Natural killer cell (primary cell): ENCODE measurements at regions of chr19 and their contacts with region 1.

Region 1: DNA sequence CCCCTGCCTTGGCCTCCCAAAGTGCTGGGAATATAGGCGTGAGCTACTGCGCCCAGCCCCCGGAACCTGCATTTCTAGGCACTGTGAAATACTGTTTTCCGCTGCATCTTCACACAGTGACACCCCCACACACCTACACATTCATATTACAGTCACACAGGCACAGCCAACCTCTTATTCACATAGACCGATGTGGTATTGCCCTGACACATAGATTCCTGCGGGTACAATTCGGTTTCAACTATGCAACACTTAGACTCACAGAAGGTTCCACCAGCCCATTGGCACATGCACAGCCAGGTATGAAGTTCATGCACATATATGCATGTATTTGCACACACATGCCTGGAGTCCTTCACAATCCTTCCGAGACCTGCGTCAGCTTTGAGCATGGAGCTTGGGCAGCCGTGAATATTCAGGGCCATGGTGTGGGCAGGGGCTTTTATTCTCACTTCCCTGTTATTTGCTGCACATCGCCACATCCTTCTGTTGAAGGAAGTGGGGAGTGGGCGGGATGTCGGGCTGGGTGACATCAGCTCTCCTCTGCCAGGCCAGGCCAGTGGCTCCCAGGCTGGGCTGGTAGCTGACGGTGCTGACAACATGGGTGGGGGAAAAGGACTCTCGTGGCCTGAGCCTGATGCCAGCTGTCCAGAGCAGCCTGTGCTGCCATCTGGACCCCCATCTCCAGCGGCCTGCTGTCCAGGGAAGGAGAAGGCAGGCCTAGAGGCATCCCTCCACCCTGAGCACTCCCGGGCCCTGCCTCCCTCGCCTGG is 5.4 kb upstream of the CDC37 start:
- DNase-seq: peak; percentile 64 to 75
- ATAC-seq: peak; percentile 46 to 69 (median 59)
- H3K4me3 ChIP-seq: no peak overlapping the region
- H3K4me3 Mint-ChIP-seq: peak overlapping the region; percentile 88
- H3K27ac ChIP-seq: peak overlapping the region; percentile 73
- H3K27ac Mint-ChIP-seq: peak overlapping the region; percentile 97 to 98
- H3K4me1 ChIP-seq: peaks cover 93% of the 10 kb centered on the region
- H3K4me1 Mint-ChIP-seq: peaks cover 66 to 81% of the 10 kb centered on the region in 2 donors
- H3K27me3 ChIP-seq: no peaks in the 10 kb centered on the region
- H3K27me3 Mint-ChIP-seq: no peaks in the 10 kb centered on the region
- CTCF ChIP-seq: no peak

Region 2: GRCh38 chr19:10424011-10424637 is 15.4 kb after region 1 on chr19:
- intact Hi-C with region 1: loop called (anchors 1 kb)
- DNase-seq: peak; percentile 69 to 81
- ATAC-seq: peak; percentile 14 to 28 (median 23)
- H3K4me3 ChIP-seq: peak overlapping the region; percentile 24
- H3K4me3 Mint-ChIP-seq: peak overlapping the region; percentile 88
- H3K27ac ChIP-seq: peak overlapping the region; percentile 69
- H3K27ac Mint-ChIP-seq: peak overlapping the region; percentile 95 to 96
- H3K4me1 ChIP-seq: peaks cover 87% of the 10 kb centered on the region
- H3K4me1 Mint-ChIP-seq: peaks cover 49 to 73% of the 10 kb centered on the region in 2 donors
- H3K27me3 ChIP-seq: peaks cover 29% of the 10 kb centered on the region
- H3K27me3 Mint-ChIP-seq: peaks cover 27% of the 10 kb centered on the region in 2 donors
- CTCF ChIP-seq: peak; percentile 91